ENCODE measurements at regions of chr15 and their contacts with region 1.

Region 1: DNA sequence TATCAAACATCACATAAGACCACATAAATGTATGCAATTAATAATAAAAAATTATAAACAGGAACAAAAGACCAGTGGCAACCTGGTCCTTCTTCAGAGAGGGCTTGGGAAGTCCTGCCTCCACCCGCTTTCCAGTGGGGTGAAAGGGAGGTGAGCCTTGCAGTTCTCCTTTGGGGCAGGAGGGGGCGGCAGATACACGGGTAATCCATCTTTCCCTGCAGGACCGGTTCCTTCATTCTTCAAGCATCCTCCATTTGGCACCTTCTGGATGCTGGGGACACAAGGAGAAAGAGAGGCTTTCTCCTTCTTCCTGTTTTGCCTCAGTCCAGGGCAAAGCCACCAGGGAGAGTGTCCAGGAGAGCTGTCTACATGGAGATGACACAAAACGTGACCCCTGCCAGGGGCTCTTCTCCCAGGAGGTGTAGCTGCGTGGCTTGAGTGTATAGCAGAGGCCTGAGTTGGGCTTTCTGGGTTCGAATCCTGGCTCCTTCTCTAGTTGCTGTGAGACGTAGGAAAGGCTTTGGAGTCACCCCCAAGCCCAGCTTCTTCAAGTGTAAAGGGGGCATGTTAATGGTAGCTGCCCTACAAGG is 23.2 kb downstream of the RPLP1 start:
- DNase-seq: peak; percentile 75 to 77
- H3K4me3 ChIP-seq: no peak overlapping the region
- H3K27ac ChIP-seq: no peak overlapping the region
- H3K4me1 ChIP-seq: no peaks in the 10 kb centered on the region
- H3K27me3 ChIP-seq: no peaks in the 10 kb centered on the region
- CTCF ChIP-seq: peak; percentile 46 to 92 (median 85)
- POLR2A ChIP-seq: no peak

Region 2: GRCh38 chr15:69320977-69321554 is 154.8 kb before region 1 on chr15:
- intact Hi-C with region 1: no loop called
- DNase-seq: no peak
- H3K4me3 ChIP-seq: no peak overlapping the region
- H3K27ac ChIP-seq: no peak overlapping the region
- H3K4me1 ChIP-seq: no peaks in the 10 kb centered on the region
- H3K27me3 ChIP-seq: no peaks in the 10 kb centered on the region
- CTCF ChIP-seq: no peak
- POLR2A ChIP-seq: no peak

Region 3: GRCh38 chr15:69798481-69799250 is 322.8 kb after region 1 on chr15:
- intact Hi-C with region 1: no loop called
- DNase-seq: peak; percentile 29 to 38
- H3K4me3 ChIP-seq: no peak overlapping the region
- H3K27ac ChIP-seq: no peak overlapping the region
- H3K4me1 ChIP-seq: peaks cover 7 to 17% of the 10 kb centered on the region in 2 donors
- H3K27me3 ChIP-seq: no peaks in the 10 kb centered on the region
- CTCF ChIP-seq: no peak
- POLR2A ChIP-seq: no peak

Region 4: DNA sequence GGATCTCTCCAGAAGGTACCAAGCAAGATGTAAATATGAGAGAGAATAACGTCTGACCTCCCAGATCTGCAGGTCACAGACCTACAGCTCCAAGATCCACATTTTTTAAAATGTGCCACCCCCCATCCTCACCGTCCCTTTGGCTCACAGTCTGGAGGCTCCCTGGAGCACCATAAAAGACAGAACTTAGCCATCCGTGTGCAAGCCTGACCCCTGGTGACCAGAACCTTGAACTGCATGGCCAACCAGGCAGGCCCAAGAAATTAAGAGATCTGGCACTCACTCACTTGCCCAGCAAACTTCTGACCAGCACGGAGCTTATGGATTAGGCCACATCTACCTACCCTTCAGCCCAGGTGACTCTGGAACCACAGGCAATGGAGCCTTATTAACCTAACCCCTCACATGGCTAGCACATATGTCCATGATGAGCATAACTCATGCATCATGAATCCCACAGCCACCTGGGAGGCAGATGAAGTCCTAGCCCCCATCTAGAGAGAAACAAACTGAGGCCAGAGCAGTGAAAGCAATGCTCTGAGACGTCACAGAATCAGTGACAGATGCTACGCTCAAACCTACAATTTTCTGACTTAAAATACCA is 1012.2 kb after region 1 on chr15:
- intact Hi-C with region 1: loop called (anchors 5 kb)
- DNase-seq: peak; percentile 61 to 66
- H3K4me3 ChIP-seq: no peak overlapping the region
- H3K27ac ChIP-seq: no peak overlapping the region
- H3K4me1 ChIP-seq: no peaks in the 10 kb centered on the region
- H3K27me3 ChIP-seq: no peaks in the 10 kb centered on the region
- CTCF ChIP-seq: peak; percentile 84 to 94 (median 91)
- POLR2A ChIP-seq: no peak